ENCODE measurements at regions of chr5 and their contacts with region 1.

Region 1: GRCh38 chr5:10364186-10364683 is 10.7 kb downstream of the MARCHF6 start:
- DNase-seq: peak in 2 of 5 donors; percentile 15 to 21
- H3K4me3 ChIP-seq: no peak overlapping the region
- H3K4me3 Mint-ChIP-seq: peak overlapping the region in 3 of 8 donors; percentile 13 to 24 (median 21)
- H3K27ac ChIP-seq: no peak overlapping the region
- H3K27ac Mint-ChIP-seq: peak overlapping the region in 3 of 7 donors; percentile 5 to 59 (median 48)
- H3K4me1 ChIP-seq: peaks cover 63% of the 10 kb centered on the region
- H3K4me1 Mint-ChIP-seq: peaks cover 48 to 93% (median 74%) of the 10 kb centered on the region in 4 donors
- H3K27me3 ChIP-seq: no peaks in the 10 kb centered on the region
- H3K27me3 Mint-ChIP-seq: no peaks in the 10 kb centered on the region

Region 2: DNA sequence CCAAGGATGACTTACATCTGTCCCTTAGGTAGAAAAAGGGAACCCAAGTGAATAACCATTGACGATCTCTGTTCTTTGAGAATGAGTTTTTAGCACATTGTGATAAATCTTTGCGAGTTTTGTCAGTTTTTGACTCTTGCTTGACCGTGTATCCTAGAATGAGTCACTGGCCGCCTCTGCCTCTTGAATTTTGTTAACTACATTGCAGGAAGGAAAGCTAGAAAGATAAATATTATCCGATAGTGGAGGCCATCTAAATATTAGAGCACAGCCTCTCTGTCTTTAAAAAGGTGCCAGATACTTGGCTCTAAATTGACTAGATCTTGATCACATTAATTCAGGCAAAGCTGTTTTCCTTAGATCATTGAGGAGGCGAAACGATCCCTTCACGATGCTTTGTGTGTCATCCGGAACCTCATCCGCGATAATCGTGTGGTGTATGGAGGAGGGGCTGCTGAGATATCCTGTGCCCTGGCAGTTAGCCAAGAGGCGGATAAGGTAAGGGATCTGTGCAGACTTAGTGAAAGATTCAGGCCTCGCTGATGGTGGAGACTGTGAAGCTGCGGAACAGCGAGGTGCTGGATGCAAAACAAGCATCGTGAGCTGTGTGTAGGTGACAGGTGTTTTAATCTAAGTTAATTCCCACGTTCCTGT is 102.0 kb before region 1 on chr5:
- CTCF ChIA-PET with region 1: no interaction called
- POLR2A ChIA-PET with region 1: no interaction called
- intact Hi-C with region 1: no loop called
- DNase-seq: no peak
- H3K4me3 ChIP-seq: no peak overlapping the region
- H3K4me3 Mint-ChIP-seq: peak overlapping the region in 1 of 8 donors; percentile 45
- H3K27ac ChIP-seq: no peak overlapping the region
- H3K27ac Mint-ChIP-seq: no peak overlapping the region
- H3K4me1 ChIP-seq: no peaks in the 10 kb centered on the region
- H3K4me1 Mint-ChIP-seq: peaks cover 0 to 5% (median 4%) of the 10 kb centered on the region in 4 donors
- H3K27me3 ChIP-seq: no peaks in the 10 kb centered on the region
- H3K27me3 Mint-ChIP-seq: no peaks in the 10 kb centered on the region

Region 3: DNA sequence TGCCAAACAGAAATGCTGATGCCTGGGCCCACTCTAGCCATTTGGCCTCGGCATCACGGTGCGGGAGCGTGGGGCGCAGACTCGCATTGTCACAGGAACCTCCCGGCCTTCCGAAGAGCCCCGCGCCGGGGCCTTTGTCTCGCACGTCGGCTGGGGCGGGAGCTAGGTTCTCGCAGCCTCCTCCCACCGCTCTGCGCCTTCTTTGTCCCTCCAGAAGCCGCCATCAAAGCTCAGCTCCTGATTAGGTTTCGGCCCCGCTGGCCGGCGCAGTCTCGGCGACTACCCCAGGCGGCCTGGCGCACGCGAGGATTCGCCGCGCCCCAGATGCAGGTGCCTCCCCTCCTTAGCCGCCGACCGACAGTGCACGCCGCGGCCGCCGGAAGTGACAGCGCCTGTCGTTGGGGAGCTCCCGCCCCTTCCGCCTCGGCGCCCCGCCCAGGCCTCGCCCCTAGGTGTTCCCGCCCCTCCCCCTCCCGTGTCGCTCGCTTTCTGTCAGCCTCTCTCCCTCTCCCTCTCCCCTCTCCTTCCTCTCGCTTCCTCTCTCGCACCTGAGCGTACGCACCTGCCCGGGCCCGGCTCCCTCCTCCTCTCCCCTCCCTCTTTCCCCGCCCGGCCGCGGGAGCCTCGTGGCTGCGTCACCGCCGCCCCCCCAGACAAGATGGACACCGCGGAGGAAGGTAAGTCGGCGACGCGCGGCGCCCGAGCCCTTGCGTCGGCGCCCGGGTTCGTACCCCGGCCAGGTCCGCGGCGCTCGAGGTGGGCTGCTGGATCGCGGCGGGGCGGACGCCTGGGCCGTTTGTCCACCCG is 10.8 kb before region 1 on chr5 and contains the start of gene MARCHF6:
- CTCF ChIA-PET with region 1: interaction called, 17 read pairs
- POLR2A ChIA-PET with region 1: interaction called, 17 read pairs
- intact Hi-C with region 1: no loop called
- DNase-seq: peak; percentile 94 to 97 (median 94)
- H3K4me3 ChIP-seq: peak within 1 kb of the TSS; percentile 85
- H3K4me3 Mint-ChIP-seq: peak within 1 kb of the TSS; percentile 93 to 100 (median 99)
- H3K27ac ChIP-seq: peak within 1 kb of the TSS; percentile 83
- H3K27ac Mint-ChIP-seq: peak within 1 kb of the TSS; percentile 95 to 100 (median 99)
- H3K4me1 ChIP-seq: peaks cover 49% of the 10 kb centered on the region
- H3K4me1 Mint-ChIP-seq: peaks cover 27 to 54% (median 35%) of the 10 kb centered on the region in 4 donors
- H3K27me3 ChIP-seq: no peaks in the 10 kb centered on the region
- H3K27me3 Mint-ChIP-seq: no peaks in the 10 kb centered on the region
- total RNA-seq, gene MARCHF6: 195 to 203 TPM